ENCODE measurements at regions of chr2 and their contacts with region 1.

Region 1: DNA sequence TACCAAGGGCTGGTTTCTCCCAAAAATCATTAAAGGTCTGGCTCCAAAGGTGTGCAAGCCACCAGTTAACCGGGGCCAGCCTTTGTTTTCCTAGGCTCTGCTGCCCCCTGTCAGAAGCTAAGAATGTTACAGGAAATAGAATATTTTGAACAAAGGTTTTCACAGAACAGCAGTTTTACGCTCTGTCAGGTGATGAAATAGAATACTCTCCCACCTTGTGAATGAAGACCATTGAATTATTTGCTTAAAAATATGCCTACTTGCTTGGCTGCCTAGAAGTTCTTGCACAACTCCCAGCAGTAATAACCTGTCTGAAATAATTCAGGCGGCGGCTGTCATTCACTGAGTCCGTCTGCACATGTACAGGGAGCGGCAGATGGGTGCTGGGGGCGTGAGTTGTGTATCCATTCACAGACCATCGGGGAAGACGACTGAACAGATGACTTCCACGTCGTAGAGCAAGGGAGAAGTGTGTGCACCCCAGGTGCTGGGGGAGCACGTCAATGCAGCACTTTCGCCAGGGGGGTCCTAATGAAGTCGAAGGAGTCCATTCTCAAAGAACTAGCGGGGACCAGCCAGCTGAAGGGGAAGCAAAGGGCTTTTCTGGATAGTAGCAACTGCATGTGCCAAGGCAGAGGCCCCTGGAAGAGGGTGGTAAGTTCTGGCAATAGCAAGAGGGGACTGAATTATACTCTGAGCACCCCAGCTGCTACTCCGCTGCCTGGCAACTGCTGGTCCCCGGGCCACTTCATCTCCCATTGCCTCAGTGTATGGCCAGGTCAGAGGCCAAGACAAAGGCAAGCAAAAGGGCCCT is 56.1 kb downstream of the SF3B1 start:
- H3K4me3 Mint-ChIP-seq: no peak overlapping the region
- H3K27ac Mint-ChIP-seq: no peak overlapping the region
- H3K4me1 Mint-ChIP-seq: peaks cover 5% of the 10 kb centered on the region
- H3K27me3 Mint-ChIP-seq: peaks cover 2% of the 10 kb centered on the region

Region 2: GRCh38 chr2:197001921-197002320 is 376.8 kb before region 1 on chr2:
- intact Hi-C with region 1: no loop called
- H3K4me3 Mint-ChIP-seq: no peak overlapping the region
- H3K27ac Mint-ChIP-seq: no peak overlapping the region
- H3K4me1 Mint-ChIP-seq: no peaks in the 10 kb centered on the region
- H3K27me3 Mint-ChIP-seq: no peaks in the 10 kb centered on the region

Region 3: DNA sequence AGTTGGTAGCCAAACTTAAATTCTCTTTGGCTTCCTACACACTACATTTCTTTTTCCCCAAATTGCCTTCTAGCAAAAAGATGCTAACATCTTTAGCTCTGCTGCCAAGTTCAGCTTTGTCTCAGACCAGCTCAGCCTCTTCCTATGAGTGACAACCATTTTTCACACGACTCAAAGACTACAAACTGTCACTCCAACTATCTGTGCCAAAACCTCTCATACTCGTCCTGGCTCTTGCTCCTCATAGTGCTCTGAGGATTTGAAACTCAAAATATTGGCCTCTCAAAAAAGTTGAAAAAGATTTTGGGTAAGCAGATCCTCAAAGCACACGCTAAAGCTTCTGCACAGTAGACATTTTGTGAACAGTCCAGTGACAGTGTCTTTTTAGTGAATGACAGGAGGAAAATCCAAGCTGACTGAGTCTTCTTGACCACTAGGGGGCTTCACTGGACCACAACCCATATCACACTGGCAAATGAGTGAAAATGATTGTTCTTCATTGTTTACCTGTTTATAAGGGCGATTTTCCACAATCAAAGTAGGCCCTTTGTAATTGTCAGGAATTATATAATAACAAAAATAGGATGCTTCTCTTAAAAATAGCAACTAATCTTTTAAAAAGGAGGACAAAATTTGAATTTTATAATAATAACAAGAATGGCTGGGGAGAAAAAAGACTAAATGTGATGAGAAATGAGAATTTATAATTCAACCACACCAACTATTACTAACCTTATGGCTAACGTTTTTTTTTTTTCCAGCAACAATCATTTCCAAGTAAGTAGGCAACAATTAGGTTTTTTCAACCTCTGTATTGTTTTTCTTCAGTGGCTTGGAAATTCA is 366.7 kb before region 1 on chr2:
- intact Hi-C with region 1: loop called (anchors 2 kb)
- H3K4me3 Mint-ChIP-seq: no peak overlapping the region
- H3K27ac Mint-ChIP-seq: peak overlapping the region; percentile 53
- H3K4me1 Mint-ChIP-seq: peaks cover 5% of the 10 kb centered on the region
- H3K27me3 Mint-ChIP-seq: no peaks in the 10 kb centered on the region

Region 4: GRCh38 chr2:197113275-197113711 is 265.4 kb before region 1 on chr2:
- intact Hi-C with region 1: loop called (anchors 5 kb)
- H3K4me3 Mint-ChIP-seq: no peak overlapping the region
- H3K27ac Mint-ChIP-seq: no peak overlapping the region
- H3K4me1 Mint-ChIP-seq: peaks cover 25% of the 10 kb centered on the region
- H3K27me3 Mint-ChIP-seq: no peaks in the 10 kb centered on the region

Region 5: GRCh38 chr2:197191177-197191939 is 187.3 kb before region 1 on chr2:
- intact Hi-C with region 1: loop called (anchors 5 kb)
- H3K4me3 Mint-ChIP-seq: no peak overlapping the region
- H3K27ac Mint-ChIP-seq: no peak overlapping the region
- H3K4me1 Mint-ChIP-seq: peaks cover 43% of the 10 kb centered on the region
- H3K27me3 Mint-ChIP-seq: no peaks in the 10 kb centered on the region

Region 6: GRCh38 chr2:197442857-197443256 is 64.2 kb after region 1 on chr2:
- intact Hi-C with region 1: no loop called
- H3K4me3 Mint-ChIP-seq: peak overlapping the region; percentile 18
- H3K27ac Mint-ChIP-seq: peak overlapping the region; percentile 65
- H3K4me1 Mint-ChIP-seq: peaks cover 15% of the 10 kb centered on the region
- H3K27me3 Mint-ChIP-seq: no peaks in the 10 kb centered on the region

Measured in dendritic cell treated with granulocyte-macrophage colony-stimulating factor and Interleukin-4, amounts not matched to agents 40 ng/mL and 50 ng/mL, for 4 days (primary cell).